ENCODE measurements at regions of chr1 and their contacts with region 1.

Region 1: DNA sequence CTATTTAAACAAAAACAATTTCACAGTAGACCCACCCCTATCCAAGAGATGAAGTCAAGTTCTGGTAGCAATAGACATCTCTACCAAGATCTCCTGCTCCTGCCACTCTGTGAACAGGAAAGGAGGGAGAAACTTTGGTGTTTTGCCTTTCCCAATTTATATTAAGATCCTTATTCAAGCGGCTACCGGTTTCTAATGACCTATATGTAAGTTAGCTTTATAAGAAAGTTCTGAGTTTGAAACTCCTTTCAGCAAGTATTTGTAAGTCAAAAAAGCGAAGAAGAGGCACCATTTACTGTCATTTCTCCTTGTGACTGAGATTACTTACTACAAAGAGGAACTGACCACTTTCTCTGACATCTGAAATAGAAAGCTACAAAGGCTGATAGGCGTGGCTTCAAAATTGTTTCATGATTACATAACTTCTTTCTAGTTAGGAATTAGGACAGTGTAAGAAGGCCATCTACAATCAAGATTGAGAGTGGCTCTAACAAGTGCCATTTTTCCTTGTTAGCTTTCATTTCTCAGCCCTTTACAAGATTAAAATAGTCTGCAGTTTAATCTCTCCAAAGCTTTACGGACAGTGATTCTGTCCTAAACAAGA is at the start of gene MNDA:
- DNase-seq: no peak
- H3K4me3 Mint-ChIP-seq: peak within 1 kb of the TSS; percentile 6
- H3K27ac Mint-ChIP-seq: peak within 1 kb of the TSS; percentile 7
- H3K4me1 Mint-ChIP-seq: peaks cover 13% of the 10 kb centered on the region
- H3K27me3 Mint-ChIP-seq: peaks cover 5% of the 10 kb centered on the region
- total RNA-seq, gene MNDA: not detected in 2 replicates

Region 2: DNA sequence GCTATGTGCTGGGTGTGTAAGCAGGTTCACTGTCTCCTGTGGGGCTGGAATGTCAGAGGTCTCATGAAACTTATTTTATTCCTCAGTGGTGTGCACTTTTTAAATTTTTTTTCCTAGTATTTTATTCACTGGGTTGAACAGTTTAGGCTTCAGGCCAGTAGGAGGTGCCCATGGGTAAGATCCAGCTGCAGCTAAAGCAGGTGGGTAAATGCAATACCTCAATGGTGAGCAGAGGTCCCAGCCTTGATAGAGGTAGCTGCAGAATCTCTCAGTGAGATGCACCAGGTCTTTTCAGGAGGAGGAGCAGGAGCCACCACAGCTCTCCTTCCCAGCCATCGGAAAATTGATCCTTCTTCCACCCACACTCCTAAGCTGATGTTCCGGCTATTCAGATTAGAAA is 37.4 kb before region 1 on chr1:
- intact Hi-C with region 1: loop called (anchors 5 kb)
- DNase-seq: peak; percentile 79
- H3K4me3 Mint-ChIP-seq: no peak overlapping the region
- H3K27ac Mint-ChIP-seq: no peak overlapping the region
- H3K4me1 Mint-ChIP-seq: no peaks in the 10 kb centered on the region
- H3K27me3 Mint-ChIP-seq: peaks cover 21% of the 10 kb centered on the region

Region 3: DNA sequence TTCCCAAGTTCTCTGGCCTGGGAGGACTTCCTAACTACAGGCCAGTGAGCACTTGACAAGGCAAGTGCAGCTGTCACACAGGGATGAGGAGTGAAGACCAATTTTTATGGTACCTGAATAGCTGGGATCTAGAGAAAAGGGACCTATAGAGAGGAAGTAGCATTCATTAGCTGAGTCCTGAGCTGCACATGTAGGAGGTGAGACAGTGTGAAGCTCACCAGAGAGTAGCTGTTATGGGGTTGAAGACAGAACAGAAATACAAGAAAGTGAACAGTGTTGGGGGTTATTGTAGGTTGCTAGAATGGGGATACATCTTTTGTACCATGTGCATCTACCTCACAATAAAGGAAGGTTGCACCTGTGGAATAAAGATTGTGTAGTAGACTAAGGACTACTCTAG is 62.6 kb after region 1 on chr1:
- intact Hi-C with region 1: no loop called
- DNase-seq: no peak
- H3K4me3 Mint-ChIP-seq: no peak overlapping the region
- H3K27ac Mint-ChIP-seq: no peak overlapping the region
- H3K4me1 Mint-ChIP-seq: no peaks in the 10 kb centered on the region
- H3K27me3 Mint-ChIP-seq: peaks cover 11% of the 10 kb centered on the region